HCT116 (cell line): ENCODE measurements at regions of chr19 and their contacts with region 1.

Region 1: DNA sequence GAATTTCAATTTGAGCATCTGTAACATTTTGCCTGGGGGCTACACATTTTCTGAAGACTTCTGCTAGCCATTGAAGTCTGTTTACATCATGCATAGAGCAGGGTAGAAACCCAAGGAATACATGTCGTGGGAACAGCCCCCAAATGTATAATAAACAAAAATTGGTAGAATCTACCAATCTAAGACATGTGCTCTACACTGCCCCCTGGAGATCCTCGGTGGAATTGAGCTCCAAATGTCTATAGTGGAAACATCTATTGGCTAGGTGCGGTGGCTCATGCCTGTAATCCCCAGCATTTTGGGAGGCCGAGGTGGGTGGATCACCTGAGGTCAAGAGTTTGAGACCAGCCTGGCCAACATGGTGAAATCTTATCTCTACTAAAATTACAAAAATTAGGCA is 57.3 kb downstream of the MBD3L2B start:
- DNase-seq: peak; percentile 7
- ATAC-seq: peak; percentile 63; the same call in 1 of the 2 replicates
- H3K4me3 ChIP-seq: no peak overlapping the region
- H3K27ac ChIP-seq: no peak overlapping the region
- H3K4me1 ChIP-seq: no peaks in the 10 kb centered on the region
- H3K27me3 ChIP-seq: no peaks in the 10 kb centered on the region
- CTCF ChIP-seq: peak in 2 of 3 experiments; percentile 72 to 75; a peak in 4 of 6 replicates
- POLR2A ChIP-seq: no peak
- RAD21 ChIP-seq: no peak

Region 2: GRCh38 chr19:6947745-6948144 is 16.2 kb before region 1 on chr19:
- CTCF ChIA-PET with region 1: interaction called, 13 read pairs
- POLR2A ChIA-PET with region 1: no interaction called
- RAD21 ChIA-PET with region 1: interaction called in 1 of 2 experiments, 3 read pairs
- intact Hi-C with region 1: no loop called
- DNase-seq: peak; percentile 23
- ATAC-seq: peak; percentile 70
- H3K4me3 ChIP-seq: no peak overlapping the region
- H3K27ac ChIP-seq: no peak overlapping the region
- H3K4me1 ChIP-seq: peaks cover 0 to 7% of the 10 kb centered on the region in 2 experiments; a peak in 2 of 4 replicates
- H3K27me3 ChIP-seq: no peaks in the 10 kb centered on the region
- CTCF ChIP-seq: no peak
- POLR2A ChIP-seq: no peak
- RAD21 ChIP-seq: no peak

Region 3: DNA sequence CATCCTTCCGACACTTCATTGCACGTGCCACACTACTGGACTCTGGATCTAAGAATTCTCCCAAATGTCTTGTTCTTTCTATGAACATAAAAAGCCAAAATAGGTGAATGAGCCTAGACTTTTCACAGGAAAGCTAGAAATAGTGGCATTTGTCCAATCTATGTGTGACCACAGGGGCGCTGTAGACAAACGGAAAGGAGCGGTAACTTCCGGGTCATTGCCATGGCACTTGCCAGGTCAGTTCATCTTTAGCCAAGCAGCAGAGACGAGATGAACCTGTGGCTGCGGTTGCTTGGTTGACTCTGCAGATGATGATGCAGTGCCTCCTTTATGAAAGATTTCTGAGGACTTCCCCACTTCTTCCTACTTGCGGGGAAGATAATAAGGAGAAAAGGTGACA is 11.0 kb before region 1 on chr19:
- CTCF ChIA-PET with region 1: interaction called, 13 read pairs
- POLR2A ChIA-PET with region 1: interaction called, 3 read pairs
- RAD21 ChIA-PET with region 1: no interaction called
- intact Hi-C with region 1: no loop called
- DNase-seq: no peak
- ATAC-seq: no peak
- H3K4me3 ChIP-seq: no peak overlapping the region
- H3K27ac ChIP-seq: no peak overlapping the region
- H3K4me1 ChIP-seq: peaks cover 0 to 2% of the 10 kb centered on the region in 2 experiments; a peak in 2 of 4 replicates
- H3K27me3 ChIP-seq: no peaks in the 10 kb centered on the region
- CTCF ChIP-seq: 0 out of 6 replicates have a peak, but pooled peaks of 1 of the 3 experiments have one; percentile 11
- POLR2A ChIP-seq: no peak
- RAD21 ChIP-seq: no peak